Left ventricle myocardium inferior (tissue), 1 donor: ENCODE measurements at regions of chr19 and their contacts with region 1.

Region 1: DNA sequence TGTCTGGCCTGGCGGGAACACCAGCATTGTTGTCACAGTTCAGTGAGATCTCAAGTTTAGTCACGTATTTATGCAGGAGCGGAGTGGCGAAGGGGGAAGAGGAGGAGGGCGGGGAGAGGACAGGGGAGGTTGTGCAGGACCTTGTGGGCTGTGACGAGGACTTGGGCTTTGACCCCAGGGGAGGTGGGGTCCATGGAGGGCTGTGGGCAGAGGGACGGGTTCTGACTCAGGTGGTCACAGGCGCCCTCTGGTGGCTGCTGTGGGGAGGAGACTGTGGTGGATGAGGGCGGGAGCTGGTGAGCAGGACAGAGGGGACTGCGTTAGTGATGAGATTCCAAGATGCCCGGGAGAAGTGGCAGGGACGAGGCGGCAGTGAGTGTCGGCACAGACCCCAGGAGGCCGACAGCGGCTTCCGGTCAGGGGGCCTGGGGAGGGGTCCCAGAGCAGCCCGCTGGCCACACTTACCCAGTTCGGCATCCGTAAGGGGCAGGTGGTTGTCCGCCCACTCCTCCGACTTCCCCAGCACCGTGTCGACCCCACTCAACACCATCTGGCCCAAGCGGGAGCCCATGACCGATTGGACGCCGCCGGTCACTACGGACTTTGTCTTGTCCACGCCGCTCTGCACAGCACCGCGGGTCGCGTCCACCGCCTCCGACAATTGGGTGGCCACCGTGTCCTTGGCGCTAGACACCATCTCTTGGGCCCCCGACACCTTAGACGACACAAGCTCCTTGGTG is 15.7 kb downstream of the PLIN3 start:
- DNase-seq: peak; percentile 74
- H3K4me3 ChIP-seq: no peak overlapping the region
- H3K27ac ChIP-seq: no peak overlapping the region
- H3K4me1 ChIP-seq: no peaks in the 10 kb centered on the region
- H3K27me3 ChIP-seq: no peaks in the 10 kb centered on the region
- CTCF ChIP-seq: peak; percentile 92

Region 2: GRCh38 chr19:4811328-4812131 is 40.2 kb before region 1 on chr19:
- intact Hi-C with region 1: loop called (anchors 5 kb)
- DNase-seq: peak; percentile 85
- H3K4me3 ChIP-seq: no peak overlapping the region
- H3K27ac ChIP-seq: no peak overlapping the region
- H3K4me1 ChIP-seq: peaks cover 27% of the 10 kb centered on the region
- H3K27me3 ChIP-seq: no peaks in the 10 kb centered on the region
- CTCF ChIP-seq: peak; percentile 94